ENCODE measurements at regions of chr16 and their contacts with region 1.

Region 1: DNA sequence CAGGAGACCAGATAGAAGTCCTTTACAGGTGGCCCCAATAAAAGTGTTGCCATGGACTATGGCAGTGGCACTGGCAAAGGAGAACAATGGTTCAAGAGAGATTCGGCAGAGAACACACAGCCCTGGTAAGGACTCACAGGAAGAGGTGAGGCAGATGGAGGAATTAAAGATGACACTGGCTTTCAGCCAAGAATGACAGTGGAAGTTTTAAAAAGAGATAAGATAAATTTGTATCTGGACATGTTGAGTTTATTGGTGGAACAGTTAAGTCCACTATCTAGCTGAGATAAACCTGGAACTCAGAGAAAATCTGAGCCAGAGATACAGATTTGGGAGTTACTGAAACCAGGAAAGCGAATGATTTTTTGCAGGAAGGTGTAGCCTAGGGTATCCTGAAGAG is 20.1 kb downstream of the CMC2 start:
- DNase-seq: no peak
- H3K4me3 ChIP-seq: no peak overlapping the region
- H3K27ac ChIP-seq: no peak overlapping the region
- H3K4me1 ChIP-seq: peaks cover 0 to 9% (median 4%) of the 10 kb centered on the region in 4 experiments; a peak in 5 of 7 replicates
- H3K27me3 ChIP-seq: peaks cover 0 to 4% (median 0%) of the 10 kb centered on the region in 4 experiments; a peak in 3 of 7 replicates
- CTCF ChIP-seq: no peak
- EP300 ChIP-seq: no peak
- POLR2A ChIP-seq: no peak
- RAD21 ChIP-seq: no peak

Region 2: DNA sequence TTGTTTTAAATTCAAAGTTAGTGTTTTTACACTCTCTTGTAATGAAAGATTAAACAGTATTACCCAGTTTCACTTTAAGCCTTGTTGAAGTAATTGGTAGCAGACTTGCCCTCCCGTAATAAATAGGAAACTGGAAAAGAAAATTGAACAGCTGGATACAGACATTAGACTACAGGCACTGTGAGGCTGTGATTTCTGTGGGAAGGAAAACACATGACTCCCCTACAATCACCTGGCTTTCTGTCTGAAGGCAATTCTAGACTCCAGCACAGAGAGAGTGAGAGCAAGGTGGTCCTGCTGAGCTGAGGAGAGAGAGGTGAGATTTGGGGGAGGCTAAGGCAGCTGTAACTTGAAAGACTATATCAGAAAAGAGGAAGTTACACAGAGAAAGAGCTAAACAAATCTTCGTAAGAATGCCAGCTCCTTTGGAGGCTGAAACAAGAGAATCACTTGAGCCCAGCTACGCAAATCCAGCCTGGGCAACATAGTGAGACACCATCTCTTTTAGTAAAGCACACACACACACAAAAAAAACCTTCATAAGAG is 124.3 kb before region 1 on chr16:
- CTCF ChIA-PET with region 1: no interaction called
- POLR2A ChIA-PET with region 1: no interaction called
- DNase-seq: no peak
- H3K4me3 ChIP-seq: no peak overlapping the region
- H3K27ac ChIP-seq: no peak overlapping the region
- H3K4me1 ChIP-seq: no peaks in the 10 kb centered on the region
- H3K27me3 ChIP-seq: no peaks in the 10 kb centered on the region
- CTCF ChIP-seq: no peak
- EP300 ChIP-seq: no peak
- POLR2A ChIP-seq: no peak
- RAD21 ChIP-seq: no peak

Region 3: GRCh38 chr16:80875616-80876015 is 110.9 kb before region 1 on chr16:
- CTCF ChIA-PET with region 1: no interaction called
- POLR2A ChIA-PET with region 1: no interaction called
- DNase-seq: no peak
- H3K4me3 ChIP-seq: no peak overlapping the region
- H3K27ac ChIP-seq: no peak overlapping the region
- H3K4me1 ChIP-seq: no peaks in the 10 kb centered on the region
- H3K27me3 ChIP-seq: no peaks in the 10 kb centered on the region
- CTCF ChIP-seq: no peak
- EP300 ChIP-seq: no peak
- POLR2A ChIP-seq: no peak
- RAD21 ChIP-seq: no peak

Region 4: DNA sequence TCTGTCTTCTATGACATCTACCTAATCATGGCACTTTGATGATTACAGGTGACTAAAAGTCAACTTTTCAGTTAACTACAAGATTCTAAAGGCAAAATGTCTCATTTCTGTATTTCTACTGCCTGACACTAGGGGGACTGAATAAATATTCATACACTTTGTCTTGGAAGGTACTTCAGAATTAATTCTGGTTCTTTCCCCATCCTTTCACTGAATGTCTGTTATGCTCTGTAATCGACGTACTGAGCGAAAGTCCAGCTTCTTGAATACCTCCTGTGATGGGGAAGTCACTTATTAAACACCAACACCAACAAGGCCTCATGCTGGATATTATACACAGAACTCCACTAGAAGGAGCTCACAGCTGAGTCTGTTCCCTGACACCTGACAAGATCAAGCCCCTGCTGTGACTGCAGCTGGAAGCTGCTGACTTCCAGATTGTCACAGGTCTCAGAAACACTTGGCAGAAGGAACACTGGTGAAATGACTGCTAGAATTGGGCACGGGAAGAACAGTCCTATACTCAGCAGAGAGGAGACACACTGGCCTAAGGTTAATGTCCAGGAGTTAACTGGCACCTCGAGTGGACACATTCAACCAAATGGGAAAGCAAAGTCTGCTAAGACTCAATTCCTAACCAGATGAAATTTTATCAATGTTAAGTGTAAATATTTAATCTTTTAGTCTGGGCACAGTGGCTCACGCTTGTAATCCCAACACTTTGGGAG is 11.7 kb before region 1 on chr16:
- CTCF ChIA-PET with region 1: interaction called, 21 read pairs
- POLR2A ChIA-PET with region 1: no interaction called
- DNase-seq: no peak
- H3K4me3 ChIP-seq: no peak overlapping the region
- H3K27ac ChIP-seq: no peak overlapping the region
- H3K4me1 ChIP-seq: no peaks in the 10 kb centered on the region
- H3K27me3 ChIP-seq: no peaks in the 10 kb centered on the region
- CTCF ChIP-seq: peak in 1 of 3 experiments; percentile 35; a peak in 2 of 4 replicates
- EP300 ChIP-seq: no peak
- POLR2A ChIP-seq: no peak
- RAD21 ChIP-seq: no peak

Region 5: GRCh38 chr16:81106811-81107503 is 120.4 kb after region 1 on chr16:
- CTCF ChIA-PET with region 1: no interaction called
- POLR2A ChIA-PET with region 1: no interaction called
- DNase-seq: no peak
- H3K4me3 ChIP-seq: no peak overlapping the region
- H3K27ac ChIP-seq: no peak overlapping the region
- H3K4me1 ChIP-seq: no peaks in the 10 kb centered on the region
- H3K27me3 ChIP-seq: no peaks in the 10 kb centered on the region
- CTCF ChIP-seq: no peak
- EP300 ChIP-seq: no peak
- POLR2A ChIP-seq: no peak
- RAD21 ChIP-seq: no peak